GM12878 (cell line): ENCODE measurements at regions of chr7 and their contacts with region 1.

Region 1: DNA sequence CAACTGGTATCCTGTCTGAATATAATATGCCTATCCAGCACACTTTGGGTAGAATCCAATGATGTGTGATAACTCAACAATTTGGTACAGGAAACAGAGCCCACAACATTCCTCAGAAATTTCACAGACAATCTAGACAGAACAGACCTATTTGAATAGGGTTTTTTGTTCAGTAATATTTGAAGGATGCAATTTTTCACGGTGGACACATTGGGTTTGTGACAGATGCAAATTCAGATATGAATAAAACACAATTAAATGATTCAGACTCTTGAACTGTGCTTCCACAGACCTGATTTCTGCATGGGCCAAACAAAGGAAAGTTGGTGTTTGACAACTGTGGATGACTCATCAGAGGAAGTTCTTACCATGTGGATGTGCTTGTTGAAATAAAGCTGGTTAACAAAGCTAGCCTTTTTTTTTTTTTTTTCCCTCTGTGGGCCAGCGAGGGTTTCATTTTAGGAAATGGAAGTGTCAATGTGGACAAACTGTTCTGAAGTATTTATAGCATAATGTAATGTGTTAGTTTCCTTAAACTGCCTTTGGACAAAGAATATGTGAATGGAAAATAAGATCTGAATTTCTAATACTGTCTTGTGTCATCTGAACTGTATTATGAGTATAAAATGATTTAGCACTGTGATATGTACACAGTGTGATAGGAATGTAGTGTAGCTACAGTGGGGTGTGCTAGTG is 43.2 kb upstream of the FAM133B start:
- DNase-seq: no peak
- ATAC-seq: peak; percentile 16
- H3K4me3 ChIP-seq: no peak overlapping the region
- H3K27ac ChIP-seq: peak overlapping the region; percentile 61
- H3K4me1 ChIP-seq: peaks cover 48% of the 10 kb centered on the region
- H3K27me3 ChIP-seq: no peaks in the 10 kb centered on the region
- CTCF ChIP-seq: no peak
- EP300 ChIP-seq: peak in 1 of 2 experiments; percentile 60; a peak in 2 of 4 replicates
- POLR2A ChIP-seq: no peak
- RAD21 ChIP-seq: no peak

Region 2: DNA sequence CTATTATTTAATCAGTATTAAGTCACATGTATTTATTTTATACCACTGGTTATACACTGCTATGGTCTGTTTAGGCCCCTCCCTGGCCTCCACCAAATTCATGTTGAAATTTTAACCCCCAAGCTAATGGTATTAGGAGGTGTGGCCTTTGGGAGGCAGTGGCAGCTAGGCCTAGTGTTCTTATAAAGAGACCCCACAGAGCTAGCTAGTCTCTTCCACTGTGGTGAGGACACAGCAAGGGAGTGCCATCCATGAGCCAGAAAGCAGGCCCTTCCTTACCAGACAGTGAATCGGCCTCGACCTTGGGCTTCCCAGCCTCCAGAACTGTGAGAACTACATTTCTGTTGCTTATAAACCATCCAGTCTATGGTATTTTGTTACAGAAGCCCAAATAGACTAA is 76.1 kb before region 1 on chr7:
- CTCF ChIA-PET with region 1: no interaction called
- POLR2A ChIA-PET with region 1: no interaction called
- RAD21 ChIA-PET with region 1: no interaction called
- SMC1A ChIA-PET with region 1: no interaction called
- in situ Hi-C with region 1: no loop called
- intact Hi-C with region 1: no loop called
- DNase-seq: no peak
- ATAC-seq: peak; percentile 39
- H3K4me3 ChIP-seq: no peak overlapping the region
- H3K27ac ChIP-seq: no peak overlapping the region
- H3K4me1 ChIP-seq: no peaks in the 10 kb centered on the region
- H3K27me3 ChIP-seq: no peaks in the 10 kb centered on the region
- CTCF ChIP-seq: no peak
- EP300 ChIP-seq: no peak
- POLR2A ChIP-seq: no peak
- RAD21 ChIP-seq: no peak

Region 3: GRCh38 chr7:92648067-92648466 is 14.7 kb after region 1 on chr7:
- CTCF ChIA-PET with region 1: interaction called, 40 read pairs
- POLR2A ChIA-PET with region 1: interaction called, 25 read pairs
- RAD21 ChIA-PET with region 1: interaction called, 47 read pairs
- SMC1A ChIA-PET with region 1: interaction called, 176 read pairs
- in situ Hi-C with region 1: no loop called
- intact Hi-C with region 1: no loop called
- DNase-seq: peak; percentile 74
- ATAC-seq: peak; percentile 72
- H3K4me3 ChIP-seq: no peak overlapping the region
- H3K27ac ChIP-seq: peak overlapping the region; percentile 23; the same call in 1 of the 2 replicates
- H3K4me1 ChIP-seq: peaks cover 23% of the 10 kb centered on the region
- H3K27me3 ChIP-seq: no peaks in the 10 kb centered on the region
- CTCF ChIP-seq: no peak
- EP300 ChIP-seq: peak; percentile 86 to 92
- POLR2A ChIP-seq: no peak
- RAD21 ChIP-seq: no peak

Region 4: GRCh38 chr7:92708111-92709042 is 75.0 kb after region 1 on chr7:
- CTCF ChIA-PET with region 1: no interaction called
- POLR2A ChIA-PET with region 1: no interaction called
- RAD21 ChIA-PET with region 1: no interaction called
- SMC1A ChIA-PET with region 1: no interaction called
- in situ Hi-C with region 1: no loop called
- intact Hi-C with region 1: loop called (anchors 1 kb)
- DNase-seq: no peak
- ATAC-seq: peak; percentile 87
- H3K4me3 ChIP-seq: no peak overlapping the region
- H3K27ac ChIP-seq: no peak overlapping the region
- H3K4me1 ChIP-seq: peaks cover 5% of the 10 kb centered on the region; the same call in 1 of the 2 replicates
- H3K27me3 ChIP-seq: no peaks in the 10 kb centered on the region
- CTCF ChIP-seq: no peak
- EP300 ChIP-seq: no peak
- POLR2A ChIP-seq: no peak
- RAD21 ChIP-seq: no peak

Region 5: GRCh38 chr7:92797693-92798092 is 164.3 kb after region 1 on chr7:
- CTCF ChIA-PET with region 1: no interaction called
- POLR2A ChIA-PET with region 1: no interaction called
- RAD21 ChIA-PET with region 1: no interaction called
- SMC1A ChIA-PET with region 1: interaction called, 11 read pairs
- in situ Hi-C with region 1: no loop called
- intact Hi-C with region 1: no loop called
- DNase-seq: no peak
- ATAC-seq: peak; percentile 55
- H3K4me3 ChIP-seq: 0 out of 2 replicates have a peak overlapping the region, but pooled peaks have one; percentile 3
- H3K27ac ChIP-seq: peak overlapping the region; percentile 45; the same call in 1 of the 2 replicates
- H3K4me1 ChIP-seq: peaks cover 22% of the 10 kb centered on the region
- H3K27me3 ChIP-seq: no peaks in the 10 kb centered on the region
- CTCF ChIP-seq: no peak
- EP300 ChIP-seq: no peak
- POLR2A ChIP-seq: no peak
- RAD21 ChIP-seq: no peak

Region 6: GRCh38 chr7:93622036-93623033 is 989.0 kb after region 1 on chr7:
- CTCF ChIA-PET with region 1: no interaction called
- POLR2A ChIA-PET with region 1: no interaction called
- RAD21 ChIA-PET with region 1: no interaction called
- SMC1A ChIA-PET with region 1: no interaction called
- in situ Hi-C with region 1: no loop called
- intact Hi-C with region 1: no loop called
- DNase-seq: no peak
- ATAC-seq: peak; percentile 68
- H3K4me3 ChIP-seq: no peak overlapping the region
- H3K27ac ChIP-seq: no peak overlapping the region
- H3K4me1 ChIP-seq: no peaks in the 10 kb centered on the region
- H3K27me3 ChIP-seq: no peaks in the 10 kb centered on the region
- CTCF ChIP-seq: peak in 2 of 3 experiments; percentile 22 to 34; a peak in 3 of 6 replicates
- EP300 ChIP-seq: no peak
- POLR2A ChIP-seq: no peak
- RAD21 ChIP-seq: peak; percentile 29

Region 7: DNA sequence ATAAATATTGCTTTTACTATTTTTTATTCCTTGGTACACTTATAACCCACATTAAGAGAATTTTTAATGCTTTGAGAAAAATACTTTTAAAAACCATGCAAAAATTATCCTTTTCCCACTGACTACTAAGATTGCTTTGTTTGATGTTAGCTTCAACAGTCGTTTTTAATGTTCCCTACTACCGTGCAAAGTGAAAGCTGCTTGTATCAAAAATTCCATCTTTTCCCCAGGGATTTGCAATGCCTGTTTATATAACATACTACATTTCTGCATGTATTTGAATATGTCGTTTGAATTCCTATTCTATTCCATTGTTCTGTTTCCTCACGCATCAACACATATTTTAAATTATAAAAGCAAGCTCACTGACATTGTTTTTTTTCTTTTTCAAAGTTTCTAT is 1202.8 kb after region 1 on chr7:
- CTCF ChIA-PET with region 1: no interaction called
- POLR2A ChIA-PET with region 1: no interaction called
- RAD21 ChIA-PET with region 1: no interaction called
- SMC1A ChIA-PET with region 1: no interaction called
- in situ Hi-C with region 1: no loop called
- intact Hi-C with region 1: no loop called
- DNase-seq: no peak
- ATAC-seq: no peak
- H3K4me3 ChIP-seq: no peak overlapping the region
- H3K27ac ChIP-seq: no peak overlapping the region
- H3K4me1 ChIP-seq: no peaks in the 10 kb centered on the region
- H3K27me3 ChIP-seq: no peaks in the 10 kb centered on the region
- CTCF ChIP-seq: no peak
- EP300 ChIP-seq: no peak
- POLR2A ChIP-seq: no peak
- RAD21 ChIP-seq: no peak